ENCODE measurements at regions of chr5 and their contacts with region 1.

Region 1: DNA sequence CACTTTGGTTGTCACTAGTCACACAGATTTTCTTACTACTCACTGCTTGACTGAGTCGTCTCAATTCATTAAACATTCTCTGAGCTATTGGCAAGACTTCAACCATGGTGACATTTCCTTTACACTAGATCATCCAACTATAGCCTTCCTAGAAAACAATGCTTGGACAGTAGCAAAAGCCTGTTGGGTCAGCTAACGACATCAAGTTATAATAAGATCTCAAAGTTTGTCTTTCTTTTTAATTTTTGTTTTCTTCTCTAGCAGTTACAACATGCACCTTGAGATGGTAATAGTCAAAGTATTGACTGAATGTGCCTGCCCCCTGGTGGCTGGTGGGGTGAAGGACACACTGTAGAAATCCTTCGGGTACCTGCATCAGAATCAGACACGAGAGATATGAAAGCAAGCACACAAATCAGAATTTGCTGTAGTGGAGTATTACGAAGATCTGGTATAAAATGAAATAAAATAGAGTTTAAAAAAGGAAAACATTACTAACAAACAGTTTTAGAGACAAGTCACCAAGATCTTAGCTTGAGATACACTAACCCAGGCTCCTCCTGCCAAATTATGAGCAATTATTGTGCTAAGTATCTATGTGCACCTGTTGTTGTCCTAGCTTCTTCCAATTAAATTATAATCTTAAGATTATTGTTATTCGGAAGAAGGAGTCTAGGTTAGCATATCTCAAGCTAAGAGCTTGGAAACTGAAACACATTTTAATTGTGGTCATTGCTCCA is 81.2 kb downstream of the ARL15 start:
- DNase-seq: peak; percentile 38
- ATAC-seq: peak; percentile 87
- H3K4me3 ChIP-seq: no peak overlapping the region
- H3K27ac ChIP-seq: no peak overlapping the region
- H3K4me1 ChIP-seq: no peaks in the 10 kb centered on the region
- H3K27me3 ChIP-seq: no peaks in the 10 kb centered on the region
- CTCF ChIP-seq: peak; percentile 60 to 95 (median 92); a peak in 5 of 6 replicates
- POLR2A ChIP-seq: no peak
- RAD21 ChIP-seq: peak; percentile 65

Region 2: GRCh38 chr5:53631251-53631650 is 598.0 kb before region 1 on chr5:
- CTCF ChIA-PET with region 1: no interaction called
- POLR2A ChIA-PET with region 1: no interaction called
- RAD21 ChIA-PET with region 1: no interaction called
- intact Hi-C with region 1: loop called (anchors 10 kb)
- DNase-seq: no peak
- ATAC-seq: no peak
- H3K4me3 ChIP-seq: no peak overlapping the region
- H3K27ac ChIP-seq: no peak overlapping the region
- H3K4me1 ChIP-seq: no peaks in the 10 kb centered on the region
- H3K27me3 ChIP-seq: no peaks in the 10 kb centered on the region
- CTCF ChIP-seq: no peak
- POLR2A ChIP-seq: no peak
- RAD21 ChIP-seq: no peak